ENCODE measurements at regions of chr2 and their contacts with region 1.

Region 1: GRCh38 chr2:238158527-238159070 is at the start of gene ERFE:
- DNase-seq: no peak
- H3K4me3 ChIP-seq: no peak within 1 kb of the TSS
- H3K27ac ChIP-seq: no peak within 1 kb of the TSS
- H3K4me1 ChIP-seq: no peaks in the 10 kb centered on the region
- H3K27me3 ChIP-seq: peaks cover 3 to 7% of the 10 kb centered on the region in 2 experiments
- CTCF ChIP-seq: peak in 1 of 2 donors; percentile 47
- POLR2A ChIP-seq: no peak
- total RNA-seq, gene ERFE: 0.46 and 1.2 TPM in 2 replicates

Region 2: GRCh38 chr2:238169708-238170251 is 11.2 kb after region 1 on chr2:
- CTCF ChIA-PET with region 1: interaction called, 13 read pairs
- POLR2A ChIA-PET with region 1: no interaction called
- dilution Hi-C with region 1: no loop called
- intact Hi-C with region 1: no loop called
- DNase-seq: peak; percentile 81
- H3K4me3 ChIP-seq: no peak overlapping the region
- H3K27ac ChIP-seq: peak overlapping the region; percentile 89
- H3K4me1 ChIP-seq: peaks cover 29% of the 10 kb centered on the region
- H3K27me3 ChIP-seq: no peaks in the 10 kb centered on the region
- CTCF ChIP-seq: no peak
- POLR2A ChIP-seq: no peak

Region 3: GRCh38 chr2:238203094-238203972 is 44.7 kb after region 1 on chr2 and contains the start of gene ILKAP:
- CTCF ChIA-PET with region 1: no interaction called
- POLR2A ChIA-PET with region 1: no interaction called
- dilution Hi-C with region 1: no loop called
- intact Hi-C with region 1: loop called (anchors 2 kb)
- DNase-seq: peak; percentile 74
- H3K4me3 ChIP-seq: peak within 1 kb of the TSS; percentile 83 to 91 (median 87)
- H3K27ac ChIP-seq: peak within 1 kb of the TSS; percentile 79
- H3K4me1 ChIP-seq: peaks cover 12% of the 10 kb centered on the region
- H3K27me3 ChIP-seq: peaks cover 11 to 12% of the 10 kb centered on the region in 2 experiments
- CTCF ChIP-seq: no peak
- POLR2A ChIP-seq: peak; percentile 90
- total RNA-seq, gene ILKAP: 47.5 and 49.2 TPM in 2 replicates

Region 4: GRCh38 chr2:238231251-238231793 is 72.7 kb after region 1 on chr2:
- CTCF ChIA-PET with region 1: interaction called, 3 read pairs
- POLR2A ChIA-PET with region 1: no interaction called
- dilution Hi-C with region 1: no loop called
- intact Hi-C with region 1: loop called (anchors 1 kb)
- DNase-seq: peak; percentile 72
- H3K4me3 ChIP-seq: peak overlapping the region in 1 of 3 experiments; percentile 29
- H3K27ac ChIP-seq: no peak overlapping the region
- H3K4me1 ChIP-seq: no peaks in the 10 kb centered on the region
- H3K27me3 ChIP-seq: peaks cover 8 to 13% of the 10 kb centered on the region in 2 experiments
- CTCF ChIP-seq: no peak
- POLR2A ChIP-seq: no peak

Measured in endothelial cell of umbilical vein (primary cell).